IMR-90 (cell line): ENCODE measurements at regions of chr12 and their contacts with region 1.

Region 1: DNA sequence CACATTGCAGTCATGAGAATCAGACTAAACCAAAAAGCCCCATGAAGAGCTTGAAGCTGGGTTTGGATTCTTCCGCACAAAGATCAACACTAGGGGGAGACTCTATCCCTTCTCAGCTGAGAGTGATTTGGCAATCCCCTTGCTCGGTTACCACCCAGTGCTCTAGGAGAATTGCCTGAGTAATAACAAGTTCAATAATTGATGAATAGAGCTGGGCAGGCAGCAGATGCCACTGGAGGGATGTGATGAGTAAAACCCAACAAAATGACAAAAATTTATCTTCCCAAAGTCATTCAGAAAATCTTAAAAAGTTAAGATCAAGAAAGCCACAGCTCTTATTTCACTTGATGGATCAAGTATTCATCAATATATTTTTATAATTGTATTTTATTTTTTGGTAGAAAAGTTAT is 185.6 kb upstream of the ARID2 start:
- DNase-seq: peak; percentile 87
- ATAC-seq: peak; percentile 97
- H3K4me3 ChIP-seq: no peak overlapping the region
- H3K27ac ChIP-seq: no peak overlapping the region
- H3K4me1 ChIP-seq: no peaks in the 10 kb centered on the region
- H3K27me3 ChIP-seq: no peaks in the 10 kb centered on the region
- CTCF ChIP-seq: peak; percentile 86
- POLR2A ChIP-seq: no peak
- RAD21 ChIP-seq: peak; percentile 90

Region 2: GRCh38 chr12:45130881-45131281 is 413.0 kb before region 1 on chr12:
- CTCF ChIA-PET with region 1: no interaction called
- POLR2A ChIA-PET with region 1: no interaction called
- dilution Hi-C with region 1: no loop called
- in situ Hi-C with region 1: no loop called
- intact Hi-C with region 1: loop called (anchors 5 kb)
- DNase-seq: peak; percentile 63
- ATAC-seq: peak; percentile 92
- H3K4me3 ChIP-seq: no peak overlapping the region
- H3K27ac ChIP-seq: no peak overlapping the region
- H3K4me1 ChIP-seq: no peaks in the 10 kb centered on the region
- H3K27me3 ChIP-seq: peaks cover 9% of the 10 kb centered on the region
- CTCF ChIP-seq: peak; percentile 73
- POLR2A ChIP-seq: no peak
- RAD21 ChIP-seq: peak; percentile 88

Region 3: DNA sequence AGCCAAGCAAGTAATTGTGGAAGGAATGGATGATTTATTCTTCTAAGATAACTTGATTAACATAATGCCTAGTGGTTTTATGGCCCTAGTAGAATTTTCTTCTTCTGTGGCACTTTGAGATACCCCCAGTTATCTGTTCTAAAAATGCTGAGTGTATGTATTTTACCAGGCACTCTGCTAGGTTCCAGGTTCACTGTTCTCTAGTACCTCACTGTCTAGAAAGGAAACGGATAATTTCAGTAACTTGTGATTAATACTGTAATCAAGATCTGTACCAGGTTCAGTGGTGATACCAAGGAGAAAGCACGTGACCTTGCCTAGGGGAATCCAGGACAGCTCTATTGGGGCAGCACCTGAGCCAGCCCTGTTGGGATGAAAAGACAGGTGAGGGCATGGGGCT is 320.0 kb before region 1 on chr12:
- CTCF ChIA-PET with region 1: no interaction called
- POLR2A ChIA-PET with region 1: no interaction called
- dilution Hi-C with region 1: no loop called
- in situ Hi-C with region 1: no loop called
- intact Hi-C with region 1: no loop called
- DNase-seq: no peak
- ATAC-seq: no peak
- H3K4me3 ChIP-seq: no peak overlapping the region
- H3K27ac ChIP-seq: no peak overlapping the region; the same call in 1 of the 2 replicates
- H3K4me1 ChIP-seq: peaks cover 8% of the 10 kb centered on the region
- H3K27me3 ChIP-seq: no peaks in the 10 kb centered on the region
- CTCF ChIP-seq: no peak
- POLR2A ChIP-seq: no peak
- RAD21 ChIP-seq: no peak

Region 4: GRCh38 chr12:45268672-45269411 is 275.1 kb before region 1 on chr12:
- CTCF ChIA-PET with region 1: no interaction called
- POLR2A ChIA-PET with region 1: no interaction called
- dilution Hi-C with region 1: no loop called
- in situ Hi-C with region 1: no loop called
- intact Hi-C with region 1: loop called (anchors 5 kb)
- DNase-seq: peak; percentile 82
- ATAC-seq: peak; percentile 47
- H3K4me3 ChIP-seq: no peak overlapping the region
- H3K27ac ChIP-seq: no peak overlapping the region
- H3K4me1 ChIP-seq: peaks cover 9% of the 10 kb centered on the region
- H3K27me3 ChIP-seq: no peaks in the 10 kb centered on the region
- CTCF ChIP-seq: peak; percentile 61
- POLR2A ChIP-seq: no peak
- RAD21 ChIP-seq: peak; percentile 63

Region 5: DNA sequence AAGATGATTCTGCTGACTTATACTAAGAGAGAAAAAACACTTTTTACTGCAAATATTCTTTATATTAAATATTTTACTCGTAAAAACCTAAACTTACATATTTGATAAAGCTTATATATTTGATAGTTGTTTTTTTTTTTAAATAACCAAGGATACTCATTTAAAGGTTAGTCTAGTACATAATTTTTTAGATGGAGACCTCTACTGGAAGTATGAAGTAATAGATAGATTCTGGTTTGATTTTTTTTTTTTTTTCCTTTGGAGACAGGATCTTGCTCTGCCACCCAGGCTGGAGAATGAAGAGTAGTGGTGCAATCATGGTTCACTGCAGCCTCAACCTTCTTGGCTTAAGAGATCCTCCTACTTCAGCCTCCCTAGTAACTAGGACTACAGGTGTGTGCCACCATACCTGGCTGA is 202.0 kb after region 1 on chr12:
- CTCF ChIA-PET with region 1: interaction called, 7 read pairs
- POLR2A ChIA-PET with region 1: no interaction called
- dilution Hi-C with region 1: no loop called
- in situ Hi-C with region 1: loop called (anchors 10 kb)
- intact Hi-C with region 1: loop called (anchors 1 kb)
- DNase-seq: peak; percentile 46
- ATAC-seq: peak; percentile 72; the same call in 1 of the 2 replicates
- H3K4me3 ChIP-seq: no peak overlapping the region
- H3K27ac ChIP-seq: no peak overlapping the region
- H3K4me1 ChIP-seq: no peaks in the 10 kb centered on the region
- H3K27me3 ChIP-seq: no peaks in the 10 kb centered on the region
- CTCF ChIP-seq: peak; percentile 50
- POLR2A ChIP-seq: no peak
- RAD21 ChIP-seq: peak; percentile 31; the same call in 1 of the 2 replicates

Region 6: DNA sequence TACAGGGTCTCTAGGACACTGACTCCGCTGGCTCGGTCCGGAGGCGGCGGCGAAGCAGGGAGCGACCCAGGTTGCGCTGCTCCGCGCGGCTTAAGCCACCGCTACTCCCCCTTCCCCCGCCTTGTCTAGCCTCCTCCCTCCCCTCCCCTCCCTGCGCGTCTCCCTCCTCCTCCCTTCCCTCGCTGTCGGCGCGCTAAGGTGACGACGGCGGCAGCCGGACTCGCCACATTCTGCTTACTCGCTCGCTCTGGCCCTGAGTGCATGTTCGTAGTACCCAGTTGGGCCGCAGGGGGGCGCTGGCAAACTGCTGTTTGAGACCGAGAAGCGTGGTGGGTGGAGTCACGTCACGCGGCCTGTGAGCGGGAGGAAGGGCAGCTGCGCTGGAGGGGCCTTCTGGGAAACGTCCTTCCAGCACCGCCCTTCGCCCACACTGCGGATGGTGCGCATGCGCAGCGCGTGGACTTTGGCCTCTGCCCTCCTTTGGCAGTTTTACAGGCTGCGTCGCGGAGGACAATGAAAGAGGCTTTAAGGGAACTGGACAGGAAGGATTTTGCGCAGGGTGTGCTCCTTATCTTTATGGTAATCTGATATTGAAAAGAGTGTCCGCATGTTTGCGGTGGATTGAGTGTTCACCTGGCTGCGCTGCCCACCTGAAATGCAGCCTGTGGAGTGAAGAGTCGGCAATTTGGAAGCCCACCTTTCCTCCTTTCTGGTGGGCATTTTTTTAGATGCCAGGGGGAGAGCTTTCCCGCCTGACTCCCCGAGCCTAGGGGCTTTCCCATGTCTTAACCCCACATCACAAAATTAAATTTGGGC is 446.8 kb after region 1 on chr12 and contains the start of gene SCAF11:
- CTCF ChIA-PET with region 1: no interaction called
- POLR2A ChIA-PET with region 1: no interaction called
- dilution Hi-C with region 1: no loop called
- in situ Hi-C with region 1: no loop called
- intact Hi-C with region 1: loop called (anchors 5 kb)
- DNase-seq: peak; percentile 100
- ATAC-seq: peak; percentile 86
- H3K4me3 ChIP-seq: peak within 1 kb of the TSS; percentile 78
- H3K27ac ChIP-seq: peak within 1 kb of the TSS; percentile 87
- H3K4me1 ChIP-seq: peaks cover 3% of the 10 kb centered on the region; the same call in 1 of the 2 replicates
- H3K27me3 ChIP-seq: no peaks in the 10 kb centered on the region
- CTCF ChIP-seq: peak; percentile 99
- POLR2A ChIP-seq: peak; percentile 86
- RAD21 ChIP-seq: peak; percentile 84
- total RNA-seq, gene SCAF11: 70.4 and 90.3 TPM in 2 replicates

Region 7: DNA sequence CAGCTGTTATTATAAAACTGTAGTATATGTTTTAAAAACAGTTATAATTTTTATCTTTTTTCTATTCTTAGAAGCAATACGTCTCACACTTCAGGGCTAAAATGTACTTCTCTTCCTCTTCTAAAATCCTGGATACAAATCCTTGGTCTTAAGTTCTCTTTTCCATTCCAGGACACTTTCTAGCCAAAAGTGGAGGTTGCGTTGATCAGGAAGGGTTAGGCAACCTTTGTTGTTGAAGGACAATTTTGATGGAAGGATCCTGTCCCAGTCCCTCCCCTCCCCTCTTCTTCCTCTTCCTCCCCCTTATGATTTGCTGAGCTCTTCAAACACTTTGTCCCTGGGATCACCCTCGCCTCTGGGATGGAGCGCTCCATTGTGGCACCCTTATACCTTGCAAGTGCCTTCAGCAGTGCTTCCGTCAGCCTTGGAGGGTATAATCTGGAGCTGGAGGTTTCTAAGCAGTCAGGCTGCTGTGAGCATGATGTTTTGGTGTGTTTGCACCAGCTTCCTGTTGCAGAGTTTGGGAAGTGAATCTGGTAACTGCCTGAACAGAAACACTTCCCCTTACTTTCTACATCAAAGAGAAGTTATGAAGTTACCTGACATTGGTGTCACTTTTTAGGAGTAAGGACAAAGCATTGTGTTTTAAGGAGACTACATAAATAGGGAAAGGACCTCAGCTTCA is 916.1 kb after region 1 on chr12:
- CTCF ChIA-PET with region 1: no interaction called
- POLR2A ChIA-PET with region 1: no interaction called
- dilution Hi-C with region 1: no loop called
- in situ Hi-C with region 1: no loop called
- intact Hi-C with region 1: no loop called
- DNase-seq: no peak
- ATAC-seq: no peak
- H3K4me3 ChIP-seq: no peak overlapping the region
- H3K27ac ChIP-seq: peak overlapping the region; percentile 43; the same call in 1 of the 2 replicates
- H3K4me1 ChIP-seq: peaks cover 13% of the 10 kb centered on the region
- H3K27me3 ChIP-seq: no peaks in the 10 kb centered on the region
- CTCF ChIP-seq: no peak
- POLR2A ChIP-seq: no peak
- RAD21 ChIP-seq: no peak